ENCODE measurements at regions of chr1 and their contacts with region 1.

Region 1: DNA sequence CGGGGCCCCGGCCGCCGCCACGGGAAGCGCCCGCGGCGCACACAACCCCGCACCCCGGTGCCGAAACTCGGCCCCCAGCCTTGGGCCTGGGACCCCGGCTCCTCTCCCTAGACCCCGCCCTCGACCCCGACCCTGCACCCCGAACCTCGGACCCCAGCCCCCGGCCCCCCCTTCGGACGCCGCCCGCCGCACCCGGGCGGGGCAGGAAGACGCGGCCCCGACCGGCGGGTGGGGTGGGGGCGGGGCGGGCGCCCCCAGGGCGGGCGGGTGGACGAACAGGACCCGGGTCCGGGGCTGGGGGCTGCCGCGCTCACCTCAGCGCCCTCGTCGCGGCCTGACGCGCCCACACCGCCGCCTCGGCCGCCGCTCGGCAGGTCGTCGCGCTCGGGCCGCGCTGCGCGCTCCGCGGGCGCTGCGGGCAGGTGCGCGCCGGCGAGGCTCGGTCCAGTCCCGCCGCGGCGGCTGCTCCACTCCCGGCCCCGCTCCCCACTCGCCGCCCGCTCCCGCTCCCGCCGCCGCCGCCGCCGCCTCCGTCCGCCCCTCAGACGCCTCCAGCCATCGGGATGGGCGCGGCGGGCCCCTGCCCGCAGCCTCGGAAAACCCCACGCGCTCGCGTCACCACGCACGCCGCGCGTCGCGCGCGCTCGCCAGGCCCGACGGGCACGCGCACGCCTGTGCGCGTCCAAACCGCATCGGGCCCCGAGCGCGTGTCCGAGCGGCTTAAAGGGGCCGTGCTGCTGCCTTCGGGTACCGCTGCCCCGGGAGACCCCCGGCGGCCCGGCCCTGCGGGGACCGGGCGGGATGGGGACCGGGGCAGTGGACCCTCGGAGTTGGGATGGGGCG is at the start of gene GNB1:
- DNase-seq: peak; percentile 89
- H3K4me3 Mint-ChIP-seq: peak within 1 kb of the TSS; percentile 83
- H3K27ac Mint-ChIP-seq: peak within 1 kb of the TSS; percentile 85
- H3K4me1 Mint-ChIP-seq: peaks cover 48% of the 10 kb centered on the region
- H3K27me3 Mint-ChIP-seq: peaks cover 1% of the 10 kb centered on the region
- total RNA-seq, gene GNB1: 428 to 431 TPM

Region 2: GRCh38 chr1:1527092-1527816 is 363.5 kb before region 1 on chr1:
- CTCF ChIA-PET with region 1: no interaction called
- POLR2A ChIA-PET with region 1: no interaction called
- DNase-seq: no peak
- H3K4me3 Mint-ChIP-seq: no peak overlapping the region
- H3K27ac Mint-ChIP-seq: no peak overlapping the region
- H3K4me1 Mint-ChIP-seq: no peaks in the 10 kb centered on the region
- H3K27me3 Mint-ChIP-seq: no peaks in the 10 kb centered on the region

Region 3: GRCh38 chr1:1777950-1778662 is 112.6 kb before region 1 on chr1 and contains the start of gene NADK:
- CTCF ChIA-PET with region 1: no interaction called
- POLR2A ChIA-PET with region 1: interaction called, 29 read pairs
- DNase-seq: peak; percentile 76
- H3K4me3 Mint-ChIP-seq: peak within 1 kb of the TSS; percentile 77
- H3K27ac Mint-ChIP-seq: peak within 1 kb of the TSS; percentile 99
- H3K4me1 Mint-ChIP-seq: peaks cover 67% of the 10 kb centered on the region
- H3K27me3 Mint-ChIP-seq: no peaks in the 10 kb centered on the region
- total RNA-seq, gene NADK: 78.0 to 81.5 TPM

Region 4: DNA sequence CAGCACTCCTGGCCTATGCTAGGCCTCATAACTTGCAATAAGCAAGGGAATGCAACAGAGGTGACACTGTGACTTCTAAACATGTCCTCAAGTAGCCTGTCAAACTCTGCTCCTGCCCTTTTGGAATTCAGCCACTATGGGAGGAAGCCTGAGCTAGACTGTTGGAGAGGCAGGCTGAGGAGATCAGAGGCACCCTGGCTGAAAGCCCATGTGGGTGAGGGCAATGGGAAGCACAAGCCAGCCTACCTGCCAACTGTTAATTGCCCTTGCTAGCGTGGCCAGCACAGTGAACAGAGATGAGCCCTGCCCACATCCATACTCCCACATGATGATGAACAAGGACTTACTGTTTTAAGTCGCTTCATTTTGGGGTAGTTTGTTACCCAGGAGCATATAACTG is 17.5 kb before region 1 on chr1:
- CTCF ChIA-PET with region 1: interaction called, 3 read pairs
- POLR2A ChIA-PET with region 1: interaction called, 29 read pairs
- DNase-seq: no peak
- H3K4me3 Mint-ChIP-seq: no peak overlapping the region
- H3K27ac Mint-ChIP-seq: no peak overlapping the region
- H3K4me1 Mint-ChIP-seq: peaks cover 51% of the 10 kb centered on the region
- H3K27me3 Mint-ChIP-seq: no peaks in the 10 kb centered on the region

Region 5: DNA sequence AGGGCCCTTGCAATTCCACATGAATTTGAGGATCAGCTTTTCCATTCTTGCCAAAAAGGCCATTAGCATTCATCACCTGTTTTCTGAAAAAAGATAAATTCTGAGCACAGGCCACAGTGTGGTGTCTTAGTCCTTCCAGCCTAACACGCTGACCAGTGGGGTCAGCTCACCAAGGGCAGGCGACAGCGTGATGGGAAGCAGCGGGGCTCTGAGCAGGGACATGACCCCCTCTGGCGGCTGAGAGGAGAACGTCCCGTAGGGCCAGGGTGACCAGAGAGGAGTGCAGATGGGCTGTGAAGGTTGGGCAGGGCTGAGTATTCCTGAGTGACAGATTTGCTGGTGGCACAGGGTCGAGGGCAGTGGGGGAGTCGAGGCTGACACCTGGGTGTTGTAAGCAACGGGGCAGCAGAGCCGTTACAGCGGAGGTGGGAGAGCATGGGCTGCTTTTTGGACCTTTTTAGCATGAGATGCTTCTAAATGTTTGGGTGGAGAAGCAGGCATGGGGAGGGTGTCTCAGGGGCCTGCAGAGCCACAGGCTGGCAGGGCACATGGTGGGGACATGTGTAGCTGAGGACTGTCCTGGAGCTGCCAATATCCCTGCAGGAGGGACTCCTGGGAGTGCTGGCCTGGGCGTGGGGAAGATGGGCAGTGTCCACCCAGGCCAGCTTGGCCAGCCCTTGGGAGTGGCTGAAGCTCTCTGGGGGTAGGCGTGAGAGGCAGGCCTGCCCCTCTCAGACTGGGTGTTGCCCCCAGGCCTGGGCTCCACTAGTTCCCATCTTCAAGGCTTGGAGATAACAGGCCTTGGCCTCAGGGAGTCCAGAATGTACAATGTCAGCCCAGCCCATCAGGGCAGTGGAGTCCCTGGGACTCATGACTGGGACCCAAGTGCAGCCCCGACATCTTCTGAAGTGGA is 15.7 kb after region 1 on chr1:
- CTCF ChIA-PET with region 1: interaction called, 30 read pairs
- POLR2A ChIA-PET with region 1: interaction called, 13 read pairs
- DNase-seq: peak; percentile 72
- H3K4me3 Mint-ChIP-seq: peak overlapping the region; percentile 17
- H3K27ac Mint-ChIP-seq: peak overlapping the region; percentile 31
- H3K4me1 Mint-ChIP-seq: peaks cover 18% of the 10 kb centered on the region
- H3K27me3 Mint-ChIP-seq: no peaks in the 10 kb centered on the region

Measured in activated CD4-positive, alpha-beta memory T cell treated with anti-CD3 and anti-CD28 coated beads, Interleukin-2, amount 10 ng/mL, durations not matched to agents 7 days and 5 days (primary cell).